ENCODE measurements at regions of chr9 and their contacts with region 1.

Region 1: DNA sequence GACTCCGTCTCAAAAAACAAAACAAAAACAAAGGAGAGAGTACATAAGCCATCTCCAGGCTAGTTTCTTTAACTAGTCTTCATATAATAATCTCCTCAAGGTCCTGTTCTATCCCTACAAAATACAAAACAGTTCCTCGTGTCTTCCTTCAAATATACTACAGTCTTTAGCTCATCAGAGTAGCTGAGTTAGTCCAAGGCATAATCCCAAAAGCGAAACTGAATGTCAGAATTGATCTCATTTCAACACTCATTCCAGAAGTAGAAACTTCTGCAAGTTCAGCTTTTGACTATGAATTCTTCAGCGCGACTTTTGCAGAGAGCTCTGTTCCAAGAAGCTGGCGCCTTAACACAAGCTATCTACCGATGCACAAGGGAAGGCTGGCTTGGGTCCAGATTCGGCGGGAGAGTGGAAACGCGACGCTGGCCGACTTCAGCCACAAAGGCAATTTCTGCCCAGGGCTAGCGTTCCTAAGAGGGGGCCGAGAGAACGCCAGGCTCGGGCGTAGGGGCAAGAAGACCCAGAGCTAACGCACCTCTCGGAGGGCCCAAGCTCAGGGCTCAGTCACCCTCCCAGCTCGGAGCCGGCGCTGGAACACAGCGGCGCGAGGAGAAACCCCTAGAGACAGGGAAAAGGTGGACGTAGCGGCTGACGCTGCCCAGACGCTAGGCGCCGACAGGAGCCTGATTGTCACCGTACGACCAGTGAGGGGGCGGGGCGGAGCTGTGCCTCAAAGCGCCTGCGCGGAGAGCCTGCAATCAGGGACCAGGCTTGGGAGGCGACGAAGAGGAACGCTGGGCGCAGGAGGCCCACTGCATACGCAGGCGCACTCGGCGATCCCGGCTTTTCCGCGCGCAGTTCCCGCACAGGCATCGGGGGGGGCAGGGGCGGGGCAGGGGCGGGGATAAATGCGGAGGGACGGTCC is 469 bp upstream of the HSDL2 start:
- DNase-seq: peak; percentile 99 to 100
- ATAC-seq: peak; percentile 81 to 84
- H3K4me3 ChIP-seq: peak overlapping the region; percentile 89 to 99 (median 93)
- H3K27ac ChIP-seq: peak overlapping the region; percentile 93 to 99 (median 97)
- H3K4me1 ChIP-seq: peaks cover 43 to 50% of the 10 kb centered on the region in 2 donors
- H3K27me3 ChIP-seq: no peaks in the 10 kb centered on the region
- CTCF ChIP-seq: peak in 2 of 5 experiments; percentile 13 to 21
- POLR2A ChIP-seq: peak; percentile 91 to 95

Region 2: DNA sequence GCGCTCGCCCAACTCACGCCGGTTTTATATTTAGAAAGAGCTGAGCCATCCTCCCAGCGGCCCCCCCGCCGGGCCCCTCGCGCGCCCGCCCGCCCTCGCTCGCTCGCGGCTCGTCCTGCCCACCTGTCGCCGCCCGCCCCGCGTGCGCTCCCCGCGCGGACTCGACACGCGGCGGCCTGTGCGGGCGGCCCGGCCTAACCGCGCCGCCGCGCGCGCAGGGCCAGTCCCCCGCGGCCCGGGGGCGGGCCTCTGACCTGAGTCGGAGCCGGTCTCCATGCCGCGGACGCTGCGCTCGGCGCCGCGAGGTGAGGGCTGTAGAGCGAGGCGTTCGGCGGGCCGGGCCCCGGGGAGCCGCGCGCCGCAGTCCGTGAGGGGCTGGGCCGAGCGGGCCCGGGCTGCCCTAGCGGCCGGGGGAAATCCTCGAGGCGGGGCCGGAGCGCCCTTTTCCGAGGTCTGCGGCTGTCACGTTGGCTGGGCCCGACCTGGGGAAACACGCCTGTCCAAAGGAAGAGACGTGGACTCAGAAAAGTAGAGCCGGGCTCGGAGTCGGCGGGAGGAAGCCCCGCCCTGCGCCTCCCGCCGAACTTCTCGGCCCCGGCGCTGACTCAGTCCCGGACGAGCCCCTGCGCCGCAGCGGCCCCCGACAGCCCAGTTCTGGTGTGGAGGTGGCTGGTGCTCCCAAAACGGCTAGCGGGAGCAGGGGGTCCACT is 895.4 kb before region 1 on chr9 and contains the start of gene ECPAS:
- in situ Hi-C with region 1: no loop called
- intact Hi-C with region 1: loop called (anchors 5 kb)
- DNase-seq: peak; percentile 65 to 85
- ATAC-seq: peak; percentile 51 to 63
- H3K4me3 ChIP-seq: peak within 1 kb of the TSS; percentile 81 to 94 (median 88)
- H3K27ac ChIP-seq: peak within 1 kb of the TSS; percentile 95 to 99 (median 98)
- H3K4me1 ChIP-seq: peaks cover 36 to 37% of the 10 kb centered on the region in 2 donors
- H3K27me3 ChIP-seq: no peaks in the 10 kb centered on the region
- CTCF ChIP-seq: peak in 4 of 5 experiments; percentile 9 to 36 (median 15)
- POLR2A ChIP-seq: peak; percentile 71 to 75
- total RNA-seq, gene ECPAS: 320 to 509 (median 424) TPM

Region 3: GRCh38 chr9:112218908-112219307 is 160.5 kb before region 1 on chr9:
- in situ Hi-C with region 1: no loop called
- intact Hi-C with region 1: no loop called
- DNase-seq: no peak
- ATAC-seq: no peak
- H3K4me3 ChIP-seq: no peak overlapping the region
- H3K27ac ChIP-seq: no peak overlapping the region
- H3K4me1 ChIP-seq: no peaks in the 10 kb centered on the region
- H3K27me3 ChIP-seq: no peaks in the 10 kb centered on the region
- CTCF ChIP-seq: no peak
- POLR2A ChIP-seq: no peak

Region 4: GRCh38 chr9:112283582-112284253 is 95.7 kb before region 1 on chr9:
- in situ Hi-C with region 1: no loop called
- intact Hi-C with region 1: no loop called
- DNase-seq: no peak
- ATAC-seq: no peak
- H3K4me3 ChIP-seq: no peak overlapping the region
- H3K27ac ChIP-seq: no peak overlapping the region
- H3K4me1 ChIP-seq: peaks cover 0 to under 1% of the 10 kb centered on the region in 2 donors
- H3K27me3 ChIP-seq: no peaks in the 10 kb centered on the region
- CTCF ChIP-seq: no peak
- POLR2A ChIP-seq: no peak

Region 5: DNA sequence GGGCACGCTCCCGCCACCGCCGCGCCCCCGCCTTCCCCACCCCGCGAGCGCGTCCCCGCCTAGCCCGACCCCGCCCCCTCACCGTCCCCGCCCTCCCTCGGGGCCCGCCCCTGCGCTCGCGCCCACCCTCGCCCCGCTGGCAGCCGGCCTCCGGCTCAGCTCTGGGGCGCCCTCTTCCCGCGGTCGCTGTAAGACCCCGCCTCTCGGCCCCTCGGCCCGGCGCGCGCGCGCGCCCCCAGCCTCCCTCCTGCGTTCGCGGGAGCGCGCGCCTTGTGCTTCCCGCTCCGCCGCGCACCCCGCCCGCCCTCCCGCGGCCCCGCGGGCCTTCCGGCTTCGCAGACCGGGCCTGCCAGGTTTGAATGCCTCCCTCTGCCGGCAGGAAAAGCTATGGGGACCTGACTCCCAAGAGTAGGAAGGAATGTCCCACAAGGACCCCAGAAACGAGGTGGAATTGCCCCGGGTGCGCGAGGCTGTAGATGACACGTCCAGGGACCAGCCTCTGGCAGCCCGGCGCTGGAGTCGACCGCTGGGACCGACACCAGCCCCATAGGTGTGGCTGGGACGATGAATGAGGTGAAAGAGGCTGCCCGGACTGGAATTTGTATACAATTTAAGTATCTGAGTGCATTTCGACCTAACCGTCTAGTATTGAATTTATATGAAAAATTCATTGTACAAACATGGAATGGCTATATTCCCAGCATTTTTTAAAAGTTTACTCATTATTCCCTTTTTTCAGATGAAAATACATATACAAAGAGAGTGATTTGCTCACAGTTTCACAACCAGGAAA is 45.6 kb before region 1 on chr9:
- in situ Hi-C with region 1: no loop called
- intact Hi-C with region 1: loop called (anchors 1 kb)
- DNase-seq: peak; percentile 84 to 91
- ATAC-seq: peak; percentile 89
- H3K4me3 ChIP-seq: peak overlapping the region; percentile 67 to 96 (median 88)
- H3K27ac ChIP-seq: peak overlapping the region; percentile 84 to 99 (median 97)
- H3K4me1 ChIP-seq: peaks cover 9 to 16% of the 10 kb centered on the region in 2 donors
- H3K27me3 ChIP-seq: no peaks in the 10 kb centered on the region
- CTCF ChIP-seq: peak; percentile 45 to 78 (median 57)
- POLR2A ChIP-seq: no peak

Region 6: GRCh38 chr9:112421771-112422222 is 42.4 kb after region 1 on chr9:
- in situ Hi-C with region 1: no loop called
- intact Hi-C with region 1: loop called (anchors 5 kb)
- DNase-seq: peak; percentile 47 to 80
- ATAC-seq: peak; percentile 99 to 100
- H3K4me3 ChIP-seq: peak overlapping the region in 1 of 4 donors; percentile 27
- H3K27ac ChIP-seq: peak overlapping the region; percentile 75 to 83 (median 80)
- H3K4me1 ChIP-seq: peaks cover 5 to 6% of the 10 kb centered on the region in 2 donors
- H3K27me3 ChIP-seq: no peaks in the 10 kb centered on the region
- CTCF ChIP-seq: no peak
- POLR2A ChIP-seq: no peak

Region 7: GRCh38 chr9:112447283-112447761 is 67.9 kb after region 1 on chr9:
- in situ Hi-C with region 1: no loop called
- intact Hi-C with region 1: loop called (anchors 1 kb)
- DNase-seq: peak; percentile 15 to 54
- ATAC-seq: peak; percentile 94 to 98
- H3K4me3 ChIP-seq: no peak overlapping the region
- H3K27ac ChIP-seq: peak overlapping the region; percentile 57 to 79 (median 70)
- H3K4me1 ChIP-seq: peaks cover 8 to 12% of the 10 kb centered on the region in 2 donors
- H3K27me3 ChIP-seq: no peaks in the 10 kb centered on the region
- CTCF ChIP-seq: no peak
- POLR2A ChIP-seq: no peak

Region 8: DNA sequence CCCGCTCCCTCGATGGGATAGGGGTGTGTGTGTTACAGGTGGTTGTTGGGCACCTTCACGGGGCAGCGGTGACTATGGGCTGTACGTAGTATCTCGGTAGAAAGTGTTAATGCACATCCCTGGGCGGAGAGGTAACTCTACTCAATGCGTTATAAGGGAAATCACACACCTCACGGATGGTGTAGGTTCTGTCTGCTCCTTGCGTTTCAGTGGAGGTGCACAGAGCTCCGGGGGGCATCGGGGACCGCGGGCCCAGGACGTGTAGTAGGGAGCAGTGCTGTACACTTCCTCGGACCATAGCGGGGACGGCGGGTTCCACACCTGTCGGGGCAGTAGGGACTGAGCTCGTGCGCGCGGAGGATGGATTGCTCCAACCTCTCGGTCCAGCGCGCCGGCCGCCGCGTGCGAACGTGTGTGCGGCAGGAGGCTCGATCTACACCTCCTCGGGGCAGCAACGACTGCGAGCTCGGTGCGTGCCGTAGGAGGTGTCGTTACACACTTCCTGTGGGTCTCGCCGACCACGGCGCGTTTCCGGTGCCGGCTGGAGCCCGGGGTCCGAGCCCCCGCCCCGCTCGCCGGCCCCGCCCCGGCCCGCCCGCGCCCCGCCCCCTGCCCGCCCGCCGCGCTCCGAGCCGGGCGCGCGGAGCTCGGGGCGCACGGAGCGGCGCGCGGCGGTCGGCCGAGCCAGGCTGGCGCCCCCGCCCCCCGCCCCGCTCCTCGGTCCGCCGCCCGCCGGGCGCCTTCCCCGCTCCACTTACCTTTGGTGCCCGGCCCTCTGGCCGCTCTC is 107.0 kb after region 1 on chr9 and contains the start of gene KIAA1958:
- in situ Hi-C with region 1: no loop called
- intact Hi-C with region 1: loop called (anchors 5 kb)
- DNase-seq: peak; percentile 40 to 69
- ATAC-seq: peak; percentile 76 to 78
- H3K4me3 ChIP-seq: peak within 1 kb of the TSS; percentile 70 to 86 (median 80)
- H3K27ac ChIP-seq: peak within 1 kb of the TSS; percentile 64 to 77 (median 72)
- H3K4me1 ChIP-seq: peaks cover 3 to 11% of the 10 kb centered on the region in 2 donors
- H3K27me3 ChIP-seq: no peaks in the 10 kb centered on the region
- CTCF ChIP-seq: no peak
- POLR2A ChIP-seq: peak in 1 of 2 donors; percentile 35
- total RNA-seq, gene KIAA1958: 1.3 to 4.0 (median 2.6) TPM

Region 9: GRCh38 chr9:112819635-112820496 is 440.4 kb after region 1 on chr9:
- in situ Hi-C with region 1: no loop called
- intact Hi-C with region 1: loop called (anchors 10 kb)
- DNase-seq: peak; percentile 50 to 76
- ATAC-seq: peak; percentile 97 to 99
- H3K4me3 ChIP-seq: no peak overlapping the region
- H3K27ac ChIP-seq: peak overlapping the region in 3 of 4 donors; percentile 26 to 50 (median 47)
- H3K4me1 ChIP-seq: peaks cover 3 to 5% of the 10 kb centered on the region in 2 donors
- H3K27me3 ChIP-seq: no peaks in the 10 kb centered on the region
- CTCF ChIP-seq: peak; percentile 55 to 78 (median 70)
- POLR2A ChIP-seq: no peak